Sigmoid colon (tissue), 7 donors: ENCODE measurements at regions of chr20 and their contacts with region 1.

Region 1: DNA sequence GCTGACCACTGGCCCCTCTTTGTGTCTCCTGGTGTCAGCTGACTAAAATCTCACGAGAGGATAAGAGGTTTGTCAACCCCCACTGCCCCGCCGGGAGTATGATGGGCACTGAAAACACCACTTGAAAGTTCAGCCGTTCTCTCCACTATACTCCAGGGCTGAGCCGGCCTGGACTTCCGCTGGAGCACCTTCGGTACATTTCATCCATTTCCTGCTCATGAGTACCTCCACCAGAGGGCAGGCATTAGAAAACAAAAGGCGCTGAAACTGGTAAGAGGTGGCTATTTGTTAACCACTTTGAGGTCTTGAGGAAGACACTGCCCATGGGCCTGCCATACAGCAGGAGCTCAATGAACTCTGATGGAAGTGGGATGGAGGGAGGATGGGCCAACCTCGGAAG is 17.9 kb upstream of the ANKRD60 start:
- DNase-seq: no peak
- H3K4me3 ChIP-seq: no peak overlapping the region
- H3K27ac ChIP-seq: no peak overlapping the region
- H3K4me1 ChIP-seq: no peaks in the 10 kb centered on the region
- H3K27me3 ChIP-seq: no peaks in the 10 kb centered on the region
- CTCF ChIP-seq: no peak
- EP300 ChIP-seq: no peak
- POLR2A ChIP-seq: no peak

Region 2: DNA sequence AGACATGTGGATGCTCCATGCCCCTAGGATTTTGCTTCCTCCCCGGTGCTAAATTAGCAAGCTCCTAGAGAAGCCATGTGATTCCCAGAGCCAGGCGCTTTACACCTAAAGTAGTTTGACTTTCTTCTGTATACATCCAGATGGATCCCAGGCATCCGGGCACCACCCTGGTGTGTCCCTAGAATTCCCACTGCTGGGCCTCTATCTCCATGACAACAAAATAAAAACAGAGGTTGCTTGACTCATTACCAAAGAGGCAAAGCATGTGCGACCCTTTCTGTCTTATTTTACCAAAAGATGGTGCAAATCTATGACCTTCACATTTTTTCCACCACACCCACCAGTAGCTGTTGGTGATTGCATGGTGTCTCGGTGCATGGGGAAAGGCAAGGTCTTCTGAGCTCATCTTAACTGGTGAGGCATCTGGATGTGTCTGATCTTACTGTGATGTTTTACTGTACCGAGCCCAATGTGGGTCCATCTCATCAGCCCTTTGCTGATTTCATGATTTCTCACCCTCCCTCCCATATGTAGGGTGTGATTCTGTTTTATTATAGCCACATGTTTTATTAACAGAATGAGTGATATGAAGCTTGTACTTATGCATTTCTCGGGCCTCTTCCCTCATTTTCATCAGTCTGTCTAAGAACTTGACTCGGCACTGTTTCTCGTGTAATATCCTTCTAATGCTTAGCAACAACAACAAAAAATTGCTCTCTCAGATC is 115.3 kb after region 1 on chr20:
- intact Hi-C with region 1: loop called (anchors 10 kb)
- DNase-seq: no peak
- H3K4me3 ChIP-seq: no peak overlapping the region
- H3K27ac ChIP-seq: peak overlapping the region in 2 of 4 donors; percentile 9 to 44
- H3K4me1 ChIP-seq: peaks cover 0 to 38% (median 26%) of the 10 kb centered on the region in 4 donors
- H3K27me3 ChIP-seq: no peaks in the 10 kb centered on the region
- CTCF ChIP-seq: no peak
- EP300 ChIP-seq: no peak
- POLR2A ChIP-seq: no peak